Caco-2 (cell line): ENCODE measurements at regions of chr11 and their contacts with region 1.

Region 1: GRCh38 chr11:114115451-114115928 is 56.0 kb downstream of the ZBTB16 start:
- DNase-seq: peak; percentile 90 to 91
- H3K4me3 ChIP-seq: no peak overlapping the region
- H3K4me3 Mint-ChIP-seq: peak overlapping the region; percentile 12
- H3K27ac Mint-ChIP-seq: peak overlapping the region; percentile 83
- H3K4me1 ChIP-seq: peaks cover 63% of the 10 kb centered on the region
- H3K4me1 Mint-ChIP-seq: peaks cover 47% of the 10 kb centered on the region
- H3K27me3 ChIP-seq: no peaks in the 10 kb centered on the region
- H3K27me3 Mint-ChIP-seq: no peaks in the 10 kb centered on the region
- CTCF ChIP-seq: peak in 1 of 2 experiments; percentile 73

Region 2: GRCh38 chr11:113675003-113675561 is 440.4 kb before region 1 on chr11:
- CTCF ChIA-PET with region 1: no interaction called
- POLR2A ChIA-PET with region 1: no interaction called
- intact Hi-C with region 1: no loop called
- DNase-seq: no peak
- H3K4me3 ChIP-seq: no peak overlapping the region
- H3K4me3 Mint-ChIP-seq: no peak overlapping the region
- H3K27ac Mint-ChIP-seq: no peak overlapping the region
- H3K4me1 ChIP-seq: peaks cover 36% of the 10 kb centered on the region
- H3K4me1 Mint-ChIP-seq: peaks cover 23% of the 10 kb centered on the region
- H3K27me3 ChIP-seq: no peaks in the 10 kb centered on the region
- H3K27me3 Mint-ChIP-seq: no peaks in the 10 kb centered on the region
- CTCF ChIP-seq: no peak

Region 3: DNA sequence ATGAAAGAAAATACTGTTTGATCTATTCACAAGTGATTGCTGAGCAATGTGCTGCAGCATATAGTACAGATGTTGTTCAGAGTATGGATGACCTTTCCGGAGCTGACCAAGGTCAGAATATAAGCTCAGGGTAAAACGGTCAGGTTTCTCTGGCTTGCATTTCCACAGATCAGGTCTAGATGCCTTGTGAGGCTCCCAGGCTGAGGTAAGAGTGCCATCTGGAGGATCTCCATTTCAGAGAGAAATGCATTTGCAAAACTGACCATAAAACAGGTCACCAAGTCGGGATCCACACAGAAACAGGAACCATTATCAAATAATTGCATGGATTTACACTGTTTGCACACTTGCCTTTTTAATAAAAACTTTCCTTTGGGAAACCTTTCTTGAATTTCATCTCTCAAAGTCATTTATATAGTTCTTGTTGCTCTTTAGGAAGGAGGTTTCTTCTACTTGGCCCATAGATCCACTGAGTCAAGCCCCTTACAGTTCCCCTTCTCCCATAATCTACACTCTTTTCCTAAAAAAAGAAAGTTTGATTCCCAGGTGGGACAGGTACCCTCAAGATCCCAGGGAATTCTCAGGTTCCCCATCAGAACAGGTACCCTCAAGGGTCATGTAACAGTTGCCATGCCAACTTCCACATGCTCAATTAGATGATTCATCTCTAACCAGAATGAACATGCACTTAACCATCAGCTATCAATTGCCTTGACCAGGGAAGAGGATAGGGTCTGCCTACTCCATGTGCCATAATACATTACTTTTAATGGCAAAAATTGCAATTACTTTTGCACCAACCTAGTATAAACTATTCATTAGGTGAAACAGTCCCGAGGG is 384.4 kb before region 1 on chr11:
- CTCF ChIA-PET with region 1: no interaction called
- POLR2A ChIA-PET with region 1: no interaction called
- intact Hi-C with region 1: no loop called
- DNase-seq: peak; percentile 83 to 86
- H3K4me3 ChIP-seq: no peak overlapping the region
- H3K4me3 Mint-ChIP-seq: no peak overlapping the region
- H3K27ac Mint-ChIP-seq: no peak overlapping the region
- H3K4me1 ChIP-seq: peaks cover 45% of the 10 kb centered on the region
- H3K4me1 Mint-ChIP-seq: peaks cover 27% of the 10 kb centered on the region
- H3K27me3 ChIP-seq: no peaks in the 10 kb centered on the region
- H3K27me3 Mint-ChIP-seq: no peaks in the 10 kb centered on the region
- CTCF ChIP-seq: peak; percentile 89 to 92

Region 4: GRCh38 chr11:114077482-114078305 is 37.8 kb before region 1 on chr11:
- CTCF ChIA-PET with region 1: interaction called, 37 read pairs
- POLR2A ChIA-PET with region 1: interaction called, 12 read pairs
- intact Hi-C with region 1: loop called (anchors 1 kb)
- DNase-seq: peak; percentile 75 to 77
- H3K4me3 ChIP-seq: peak overlapping the region; percentile 25
- H3K4me3 Mint-ChIP-seq: peak overlapping the region; percentile 72
- H3K27ac Mint-ChIP-seq: peak overlapping the region; percentile 90
- H3K4me1 ChIP-seq: peaks cover 66% of the 10 kb centered on the region
- H3K4me1 Mint-ChIP-seq: peaks cover 57% of the 10 kb centered on the region
- H3K27me3 ChIP-seq: no peaks in the 10 kb centered on the region
- H3K27me3 Mint-ChIP-seq: no peaks in the 10 kb centered on the region
- CTCF ChIP-seq: no peak

Region 5: DNA sequence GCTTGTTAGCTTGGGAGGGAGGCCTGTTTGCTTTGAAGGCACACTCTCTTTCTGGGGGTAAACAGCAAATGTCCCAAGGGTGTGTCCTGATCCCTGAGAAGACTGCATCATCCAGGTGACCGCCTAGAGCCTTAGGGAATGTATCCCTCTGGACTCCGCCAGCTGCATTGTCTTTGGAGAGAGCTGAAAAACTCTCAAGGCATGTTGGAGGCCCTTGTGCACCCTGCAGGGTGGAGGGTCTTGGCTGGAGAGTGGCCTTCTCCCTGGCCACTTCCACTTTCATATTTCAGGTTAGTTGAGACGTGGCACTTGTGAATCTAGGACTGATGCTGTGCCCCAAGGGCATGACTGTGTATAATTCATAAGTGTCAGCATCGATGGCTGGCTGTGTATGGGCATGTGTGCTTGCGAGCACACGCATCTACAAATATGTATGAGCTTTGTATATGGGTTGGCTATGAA is 14.7 kb after region 1 on chr11:
- CTCF ChIA-PET with region 1: interaction called, 5 read pairs
- POLR2A ChIA-PET with region 1: no interaction called
- intact Hi-C with region 1: loop called (anchors 1 kb)
- DNase-seq: no peak
- H3K4me3 ChIP-seq: no peak overlapping the region
- H3K4me3 Mint-ChIP-seq: no peak overlapping the region
- H3K27ac Mint-ChIP-seq: no peak overlapping the region
- H3K4me1 ChIP-seq: peaks cover 7% of the 10 kb centered on the region; the same call in 1 of the 2 replicates
- H3K4me1 Mint-ChIP-seq: peaks cover 2% of the 10 kb centered on the region
- H3K27me3 ChIP-seq: no peaks in the 10 kb centered on the region
- H3K27me3 Mint-ChIP-seq: no peaks in the 10 kb centered on the region
- CTCF ChIP-seq: no peak

Region 6: DNA sequence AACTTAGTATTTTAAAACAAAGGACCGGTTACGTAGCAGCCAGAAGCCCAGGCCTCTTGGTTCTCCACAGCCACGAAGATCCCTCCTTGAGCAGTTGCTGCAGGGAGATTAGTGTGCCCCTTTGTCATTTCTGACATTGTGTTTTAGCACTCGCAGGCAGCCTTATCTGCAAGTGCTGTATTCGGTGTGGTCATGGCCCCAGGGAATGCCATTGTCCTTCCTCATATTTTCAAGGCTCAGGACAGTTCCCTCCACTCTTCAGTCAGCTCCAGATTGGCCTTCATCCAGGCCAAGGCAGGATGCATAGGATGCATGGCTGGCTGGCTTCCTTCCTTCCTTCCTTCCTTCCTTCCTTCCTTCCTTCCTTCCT is 32.5 kb after region 1 on chr11:
- CTCF ChIA-PET with region 1: interaction called, 12 read pairs
- POLR2A ChIA-PET with region 1: no interaction called
- intact Hi-C with region 1: loop called (anchors 1 kb)
- DNase-seq: peak in 1 of 2 experiments; percentile 19
- H3K4me3 ChIP-seq: no peak overlapping the region
- H3K4me3 Mint-ChIP-seq: no peak overlapping the region
- H3K27ac Mint-ChIP-seq: no peak overlapping the region
- H3K4me1 ChIP-seq: peaks cover 12% of the 10 kb centered on the region
- H3K4me1 Mint-ChIP-seq: peaks cover 7% of the 10 kb centered on the region
- H3K27me3 ChIP-seq: no peaks in the 10 kb centered on the region
- H3K27me3 Mint-ChIP-seq: no peaks in the 10 kb centered on the region
- CTCF ChIP-seq: no peak

Region 7: GRCh38 chr11:114209904-114210303 is 94.4 kb after region 1 on chr11:
- CTCF ChIA-PET with region 1: no interaction called
- POLR2A ChIA-PET with region 1: no interaction called
- intact Hi-C with region 1: loop called (anchors 5 kb)
- DNase-seq: peak; percentile 90 to 93
- H3K4me3 ChIP-seq: 0 out of 2 replicates have a peak overlapping the region, but pooled peaks have one; percentile 9
- H3K4me3 Mint-ChIP-seq: peak overlapping the region; percentile 68
- H3K27ac Mint-ChIP-seq: peak overlapping the region; percentile 71
- H3K4me1 ChIP-seq: peaks cover 53% of the 10 kb centered on the region
- H3K4me1 Mint-ChIP-seq: peaks cover 34% of the 10 kb centered on the region
- H3K27me3 ChIP-seq: no peaks in the 10 kb centered on the region
- H3K27me3 Mint-ChIP-seq: no peaks in the 10 kb centered on the region
- CTCF ChIP-seq: no peak